ENCODE measurements at regions of chr11 and their contacts with region 1.

Region 1: DNA sequence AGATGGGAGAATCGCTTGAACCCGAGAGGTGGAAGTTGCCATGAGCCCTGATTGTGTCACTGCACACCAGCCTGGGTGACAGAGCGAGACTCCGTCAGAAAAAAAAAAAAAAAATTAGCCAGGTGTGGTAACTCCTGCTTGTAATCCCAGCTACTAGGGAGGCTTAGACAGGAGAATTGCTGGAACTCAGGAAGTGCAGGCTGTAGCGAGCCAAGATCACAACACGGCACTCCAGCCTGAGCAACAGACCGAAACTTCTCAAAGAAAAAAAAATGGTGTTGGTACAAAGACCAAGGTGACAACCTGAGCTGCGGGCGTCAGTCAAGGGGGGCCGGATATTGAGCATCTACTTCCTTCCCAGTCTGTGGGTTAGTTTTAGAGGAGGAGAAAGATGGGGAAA is 48.4 kb upstream of the HSPA8 start:
- DNase-seq: no peak
- ATAC-seq: no peak
- H3K4me3 ChIP-seq: peak overlapping the region; percentile 21
- H3K4me3 Mint-ChIP-seq: peak overlapping the region in 7 of 10 donors; percentile 4 to 47 (median 25)
- H3K27ac ChIP-seq: no peak overlapping the region
- H3K27ac Mint-ChIP-seq: peak overlapping the region; percentile 9 to 80 (median 58)
- H3K4me1 ChIP-seq: no peaks in the 10 kb centered on the region
- H3K4me1 Mint-ChIP-seq: peaks cover 0 to 11% (median 6%) of the 10 kb centered on the region in 7 donors
- H3K27me3 ChIP-seq: no peaks in the 10 kb centered on the region
- H3K27me3 Mint-ChIP-seq: peaks cover 0 to 31% (median 0%) of the 10 kb centered on the region in 5 donors

Region 2: DNA sequence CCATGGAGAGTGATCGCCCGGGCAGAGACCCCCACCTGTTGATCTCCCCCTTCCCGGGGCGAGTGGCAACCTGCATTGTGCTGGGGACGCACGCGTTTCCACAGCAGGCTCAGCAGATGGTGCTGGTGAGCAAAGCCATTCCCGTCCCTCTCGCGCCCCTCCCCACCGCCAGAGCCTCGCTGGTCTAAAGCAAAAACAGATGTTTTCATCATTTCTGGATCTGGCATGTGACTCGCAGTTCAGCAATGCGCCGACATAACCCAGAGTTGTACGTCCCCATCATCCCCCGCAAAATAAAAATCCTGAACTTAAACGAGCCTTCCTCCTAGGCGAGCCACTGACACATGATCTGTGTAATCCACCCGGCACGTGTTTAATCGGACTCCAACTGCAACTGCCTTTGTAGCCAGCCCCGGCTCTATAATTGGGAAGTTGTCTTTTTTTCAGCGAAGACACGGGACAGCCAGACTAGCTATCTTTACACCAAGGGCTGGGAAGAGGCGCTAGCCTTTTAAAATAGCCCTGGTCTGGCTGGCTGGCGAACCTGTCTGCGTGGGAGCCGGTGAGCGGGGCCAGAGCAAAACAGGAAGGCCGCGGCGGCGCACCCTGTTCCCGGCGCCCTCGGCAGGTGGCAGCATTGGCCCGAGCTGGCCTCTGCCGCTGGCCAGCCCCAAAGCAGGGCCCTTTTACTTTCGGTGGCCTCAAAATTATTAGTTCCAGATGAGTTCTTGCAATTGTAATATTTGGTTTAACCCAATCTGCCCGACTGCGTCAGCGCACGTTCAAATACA is 1454.6 kb before region 1 on chr11:
- CTCF ChIA-PET with region 1: no interaction called
- POLR2A ChIA-PET with region 1: no interaction called
- intact Hi-C with region 1: no loop called
- DNase-seq: peak; percentile 37 to 76 (median 62)
- ATAC-seq: peak; percentile 87
- H3K4me3 ChIP-seq: peak overlapping the region; percentile 81
- H3K4me3 Mint-ChIP-seq: peak overlapping the region; percentile 76 to 94 (median 86)
- H3K27ac ChIP-seq: peak overlapping the region; percentile 48
- H3K27ac Mint-ChIP-seq: peak overlapping the region; percentile 10 to 90 (median 60)
- H3K4me1 ChIP-seq: peaks cover 12% of the 10 kb centered on the region in 2 donors
- H3K4me1 Mint-ChIP-seq: peaks cover 15 to 34% (median 26%) of the 10 kb centered on the region in 7 donors
- H3K27me3 ChIP-seq: no peaks in the 10 kb centered on the region
- H3K27me3 Mint-ChIP-seq: peaks cover 0 to 25% (median 0%) of the 10 kb centered on the region in 5 donors

Region 3: DNA sequence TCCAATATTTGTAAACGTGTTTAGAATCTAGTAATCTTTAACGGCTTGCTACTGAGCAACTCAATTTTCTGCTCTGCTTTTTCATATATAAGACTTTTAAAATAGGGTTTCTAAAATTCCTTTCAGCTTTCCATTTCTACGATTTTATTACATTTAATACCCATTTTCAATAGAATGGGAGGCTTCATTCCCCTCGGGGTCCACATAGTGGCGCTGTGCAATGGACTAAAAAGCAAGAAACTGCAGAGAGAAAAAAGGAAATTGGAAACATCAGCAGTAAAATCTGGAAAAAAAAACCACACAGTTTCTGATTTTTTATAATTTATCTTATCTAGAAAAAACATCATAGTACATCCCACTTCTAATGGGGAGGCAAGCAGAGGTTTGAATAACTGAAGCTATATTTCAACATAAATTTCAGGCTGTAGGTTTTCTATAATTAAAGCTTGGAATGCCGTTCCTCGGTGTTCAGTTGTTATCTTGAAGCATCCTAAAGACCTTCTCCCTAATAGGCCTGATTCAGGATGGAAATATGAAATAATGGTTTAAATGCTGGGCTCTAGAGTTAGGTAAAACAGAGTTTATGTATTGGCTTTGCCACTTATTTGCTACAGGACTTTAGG is 246.5 kb before region 1 on chr11:
- CTCF ChIA-PET with region 1: interaction called, 4 read pairs
- POLR2A ChIA-PET with region 1: no interaction called
- intact Hi-C with region 1: loop called in 1 of 2 experiments (anchors 5 kb)
- DNase-seq: peak in 6 of 9 donors; percentile 19 to 51 (median 40)
- ATAC-seq: peak; percentile 60
- H3K4me3 ChIP-seq: no peak overlapping the region
- H3K4me3 Mint-ChIP-seq: no peak overlapping the region
- H3K27ac ChIP-seq: no peak overlapping the region
- H3K27ac Mint-ChIP-seq: no peak overlapping the region
- H3K4me1 ChIP-seq: no peaks in the 10 kb centered on the region
- H3K4me1 Mint-ChIP-seq: peaks cover 0 to 2% (median 0%) of the 10 kb centered on the region in 7 donors
- H3K27me3 ChIP-seq: no peaks in the 10 kb centered on the region
- H3K27me3 Mint-ChIP-seq: peaks cover 0 to 49% (median 0%) of the 10 kb centered on the region in 5 donors

Region 4: GRCh38 chr11:123166071-123166559 is 55.8 kb after region 1 on chr11:
- CTCF ChIA-PET with region 1: no interaction called
- POLR2A ChIA-PET with region 1: no interaction called
- intact Hi-C with region 1: loop called in 1 of 2 experiments (anchors 5 kb)
- DNase-seq: peak in 1 of 9 donors; percentile 24
- ATAC-seq: no peak
- H3K4me3 ChIP-seq: no peak overlapping the region
- H3K4me3 Mint-ChIP-seq: no peak overlapping the region
- H3K27ac ChIP-seq: no peak overlapping the region
- H3K27ac Mint-ChIP-seq: peak overlapping the region in 1 of 9 donors; percentile 38
- H3K4me1 ChIP-seq: no peaks in the 10 kb centered on the region
- H3K4me1 Mint-ChIP-seq: peaks cover 0 to 1% (median 0%) of the 10 kb centered on the region in 7 donors
- H3K27me3 ChIP-seq: no peaks in the 10 kb centered on the region
- H3K27me3 Mint-ChIP-seq: peaks cover 0 to 14% (median 5%) of the 10 kb centered on the region in 5 donors

Region 5: DNA sequence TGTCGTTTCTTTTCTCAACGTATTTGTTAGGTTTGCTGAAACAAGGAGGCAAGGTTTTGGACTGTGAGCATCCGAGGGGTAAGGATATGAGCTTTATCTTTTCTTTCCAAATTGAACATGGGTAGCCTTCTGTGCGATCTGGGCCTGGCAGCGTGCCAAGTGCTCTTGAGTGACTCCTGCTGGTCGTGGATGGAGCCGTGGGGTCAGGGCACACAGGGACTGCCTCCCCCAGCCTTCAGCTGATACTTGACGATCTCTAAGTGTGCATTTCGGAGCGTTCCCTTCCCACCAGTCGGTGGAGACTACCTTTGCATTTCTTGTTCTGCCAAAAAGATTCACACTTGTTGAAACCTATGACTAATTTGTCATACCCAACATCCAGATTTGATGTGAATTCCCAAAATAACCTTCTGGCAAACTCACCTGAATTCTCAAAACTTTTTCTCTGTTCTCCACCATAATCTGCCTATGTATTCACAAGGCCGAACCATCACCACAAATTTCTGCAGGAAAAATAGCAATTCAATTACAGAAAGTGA is 124.8 kb after region 1 on chr11:
- CTCF ChIA-PET with region 1: no interaction called
- POLR2A ChIA-PET with region 1: no interaction called
- intact Hi-C with region 1: no loop called
- DNase-seq: peak in 8 of 9 donors; percentile 20 to 59 (median 33)
- ATAC-seq: no peak
- H3K4me3 ChIP-seq: no peak overlapping the region
- H3K4me3 Mint-ChIP-seq: no peak overlapping the region
- H3K27ac ChIP-seq: no peak overlapping the region
- H3K27ac Mint-ChIP-seq: peak overlapping the region in 2 of 9 donors; percentile 29 to 93
- H3K4me1 ChIP-seq: peaks cover 12 to 17% of the 10 kb centered on the region in 2 donors
- H3K4me1 Mint-ChIP-seq: peaks cover 14 to 43% (median 17%) of the 10 kb centered on the region in 7 donors
- H3K27me3 ChIP-seq: no peaks in the 10 kb centered on the region
- H3K27me3 Mint-ChIP-seq: peaks cover 0 to 8% (median 0%) of the 10 kb centered on the region in 5 donors

Region 6: DNA sequence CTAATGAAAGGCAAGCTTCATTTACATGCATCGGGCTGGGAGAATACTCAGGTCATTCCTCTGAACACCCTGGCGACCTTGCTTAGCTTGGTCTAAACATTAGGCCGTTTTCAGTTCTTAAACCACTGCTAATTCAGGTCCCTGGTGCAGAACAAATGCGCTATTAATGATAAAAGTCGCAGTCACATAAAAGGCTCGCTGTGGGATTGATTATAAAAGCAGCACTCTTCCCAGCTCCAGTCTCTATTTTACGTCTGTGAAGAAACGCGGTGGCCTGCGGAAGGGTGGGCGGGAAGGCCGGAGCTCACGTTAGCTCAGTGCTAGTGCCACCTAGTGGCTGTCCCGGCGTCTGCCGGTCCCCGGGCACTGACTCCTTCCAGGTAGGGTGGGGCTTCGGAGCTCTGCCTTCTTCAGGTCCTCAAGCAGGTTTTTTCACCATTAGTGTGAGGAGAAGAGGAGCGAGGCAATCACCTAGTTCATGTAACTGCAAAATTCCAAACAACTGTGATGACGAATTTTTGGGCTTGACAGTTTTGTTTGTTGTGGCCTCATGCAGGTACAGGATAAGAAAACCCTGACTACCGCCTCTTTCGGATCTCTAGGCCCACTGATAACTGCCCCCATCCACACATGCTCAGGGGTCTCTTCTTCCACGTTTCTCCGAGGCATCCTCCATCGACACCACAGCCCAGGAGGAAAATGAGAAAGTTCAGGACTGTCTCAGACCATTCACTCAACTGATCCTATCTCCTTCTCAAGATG is 151.2 kb after region 1 on chr11:
- CTCF ChIA-PET with region 1: interaction called, 3 read pairs
- POLR2A ChIA-PET with region 1: no interaction called
- intact Hi-C with region 1: loop called (anchors 1 kb)
- DNase-seq: peak in 8 of 9 donors; percentile 23 to 70 (median 30)
- ATAC-seq: peak; percentile 84
- H3K4me3 ChIP-seq: no peak overlapping the region
- H3K4me3 Mint-ChIP-seq: peak overlapping the region in 4 of 10 donors; percentile 41 to 67 (median 44)
- H3K27ac ChIP-seq: no peak overlapping the region
- H3K27ac Mint-ChIP-seq: no peak overlapping the region
- H3K4me1 ChIP-seq: no peaks in the 10 kb centered on the region
- H3K4me1 Mint-ChIP-seq: peaks cover 0 to 17% (median 7%) of the 10 kb centered on the region in 7 donors
- H3K27me3 ChIP-seq: no peaks in the 10 kb centered on the region
- H3K27me3 Mint-ChIP-seq: peaks cover 23 to 40% (median 31%) of the 10 kb centered on the region in 5 donors

Region 7: GRCh38 chr11:123478352-123478987 is 368.1 kb after region 1 on chr11:
- CTCF ChIA-PET with region 1: interaction called, 3 read pairs
- POLR2A ChIA-PET with region 1: no interaction called
- intact Hi-C with region 1: loop called (anchors 2 to 5 kb)
- DNase-seq: peak in 7 of 9 donors; percentile 27 to 61 (median 50)
- ATAC-seq: peak; percentile 64
- H3K4me3 ChIP-seq: no peak overlapping the region
- H3K4me3 Mint-ChIP-seq: peak overlapping the region in 1 of 10 donors; percentile 39
- H3K27ac ChIP-seq: no peak overlapping the region
- H3K27ac Mint-ChIP-seq: peak overlapping the region in 1 of 9 donors; percentile 30
- H3K4me1 ChIP-seq: no peaks in the 10 kb centered on the region
- H3K4me1 Mint-ChIP-seq: peaks cover 0 to 59% (median 5%) of the 10 kb centered on the region in 7 donors
- H3K27me3 ChIP-seq: no peaks in the 10 kb centered on the region
- H3K27me3 Mint-ChIP-seq: no peaks in the 10 kb centered on the region

Measured in naive thymus-derived CD4-positive, alpha-beta T cell (primary cell).